ENCODE measurements at regions of chr15 and their contacts with region 1.

Region 1: DNA sequence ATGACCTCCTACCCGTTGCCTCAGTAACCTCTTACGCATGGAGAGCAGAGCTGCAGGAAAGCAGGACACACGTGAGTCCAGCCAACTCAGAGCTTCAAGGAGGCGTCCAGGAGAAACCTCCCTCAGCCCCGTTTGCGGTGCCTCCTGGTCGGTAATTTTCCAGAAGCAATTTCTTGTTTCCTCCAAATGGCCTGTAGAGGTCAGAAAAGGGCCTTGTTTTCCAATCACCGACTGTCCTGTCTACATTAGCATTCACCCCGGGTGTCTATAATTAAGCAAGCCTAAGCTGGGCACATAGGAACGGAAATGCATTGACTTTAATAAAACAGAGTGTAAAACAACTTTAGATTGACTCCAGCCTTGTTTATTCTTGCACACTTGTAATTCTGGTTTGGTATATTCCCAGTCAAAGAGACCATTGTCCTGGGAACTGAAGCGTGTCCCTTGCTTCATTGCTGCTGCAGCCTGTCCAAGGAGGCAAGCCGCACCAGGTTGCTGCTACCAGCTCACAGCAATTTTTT is 836.2 kb downstream of the AGBL1 start:
- DNase-seq: peak in 1 of 2 donors; percentile 27
- ATAC-seq: peak; percentile 81 to 88
- H3K4me3 ChIP-seq: no peak overlapping the region
- H3K27ac ChIP-seq: peak overlapping the region in 2 of 4 donors; percentile 32 to 54
- H3K4me1 ChIP-seq: peaks cover 8 to 26% of the 10 kb centered on the region in 2 donors
- H3K27me3 ChIP-seq: no peaks in the 10 kb centered on the region
- CTCF ChIP-seq: peak in 4 of 5 experiments; percentile 9 to 57 (median 44)
- POLR2A ChIP-seq: no peak

Region 2: GRCh38 chr15:86502301-86502700 is 413.6 kb before region 1 on chr15:
- in situ Hi-C with region 1: no loop called
- intact Hi-C with region 1: no loop called
- DNase-seq: no peak
- ATAC-seq: no peak
- H3K4me3 ChIP-seq: no peak overlapping the region
- H3K27ac ChIP-seq: no peak overlapping the region
- H3K4me1 ChIP-seq: no peaks in the 10 kb centered on the region
- H3K27me3 ChIP-seq: no peaks in the 10 kb centered on the region
- CTCF ChIP-seq: no peak
- POLR2A ChIP-seq: no peak

Region 3: DNA sequence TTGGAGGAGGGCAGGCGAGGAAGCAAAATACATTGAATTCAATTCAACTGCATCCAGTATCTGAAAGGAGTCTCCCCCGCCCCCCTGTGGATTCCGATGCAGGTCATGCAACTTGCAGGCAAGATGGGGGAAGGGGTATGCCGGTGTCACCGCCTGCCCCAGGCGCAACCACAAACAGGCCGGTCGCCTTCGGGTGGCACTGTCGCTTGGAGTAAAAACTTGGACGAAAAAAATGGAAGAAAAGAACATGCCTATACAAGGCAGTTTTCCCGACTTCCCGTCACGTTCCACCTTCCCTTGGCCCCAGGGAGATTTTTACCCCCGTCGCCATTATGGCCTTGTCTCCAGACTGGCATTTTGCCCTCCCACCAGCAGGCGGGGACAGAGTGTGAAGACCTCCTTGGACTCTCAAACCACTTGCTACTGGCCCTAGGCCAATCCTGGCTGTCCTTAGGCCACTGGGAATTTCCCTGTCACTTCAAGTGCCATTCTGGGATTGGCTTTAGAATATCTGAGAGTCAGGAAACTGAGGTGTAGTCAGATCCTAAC is 1342.3 kb after region 1 on chr15:
- in situ Hi-C with region 1: loop called in 2 of 4 experiments (anchors 10 to 25 kb)
- intact Hi-C with region 1: no loop called
- DNase-seq: no peak
- ATAC-seq: no peak
- H3K4me3 ChIP-seq: peak overlapping the region in 3 of 4 donors; percentile 44 to 58 (median 54)
- H3K27ac ChIP-seq: no peak overlapping the region
- H3K4me1 ChIP-seq: peaks cover 11 to 12% of the 10 kb centered on the region in 2 donors
- H3K27me3 ChIP-seq: peaks cover 38 to 47% (median 40%) of the 10 kb centered on the region in 3 donors
- CTCF ChIP-seq: no peak
- POLR2A ChIP-seq: no peak

Region 4: DNA sequence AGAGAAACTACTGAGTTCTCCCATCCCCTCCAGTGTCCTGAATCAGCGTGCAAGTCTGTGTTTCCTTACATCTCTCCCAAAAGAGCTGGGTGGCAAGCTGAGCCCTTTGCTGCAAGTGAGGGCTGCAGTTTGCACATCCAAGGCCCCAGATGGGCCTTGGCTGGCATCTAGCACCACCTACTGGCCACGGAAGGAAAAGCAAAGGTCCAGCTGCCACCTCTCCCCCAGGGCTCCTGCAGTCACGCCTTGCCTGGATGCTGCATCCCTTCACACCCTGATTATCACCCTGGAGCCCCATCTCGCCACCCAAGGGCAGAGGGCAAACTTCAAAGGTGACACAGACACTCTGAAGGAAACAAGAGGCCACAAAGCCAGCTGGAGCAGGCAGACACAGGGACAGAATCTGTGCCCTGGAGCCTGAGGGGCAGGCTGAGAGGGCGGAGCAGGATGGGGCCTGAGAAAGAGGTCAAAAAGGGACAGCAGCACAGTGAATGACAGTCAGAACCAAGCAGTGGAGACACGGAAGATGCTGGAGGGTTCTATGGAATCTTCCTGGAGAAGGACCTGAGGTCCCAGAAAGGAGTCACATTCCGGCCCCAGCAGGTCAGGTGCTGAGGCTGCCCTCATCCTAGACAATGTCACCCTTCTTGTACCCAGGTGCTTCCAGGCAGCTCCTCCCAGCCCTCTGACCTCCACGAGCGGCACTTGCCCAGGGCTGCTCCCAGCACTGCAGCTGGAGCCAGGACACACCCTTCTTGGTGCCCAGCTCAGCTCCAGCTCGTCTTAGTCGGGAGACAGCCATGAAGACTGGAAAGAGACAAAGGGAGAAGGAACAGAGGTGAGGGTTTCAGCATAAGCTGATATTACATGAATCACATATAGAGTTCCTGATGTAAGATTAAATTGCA is 1358.9 kb after region 1 on chr15:
- in situ Hi-C with region 1: loop called in 1 of 4 experiments (anchors 25 kb)
- intact Hi-C with region 1: no loop called
- DNase-seq: peak in 1 of 2 donors; percentile 23
- ATAC-seq: peak; percentile 72 to 80
- H3K4me3 ChIP-seq: no peak overlapping the region
- H3K27ac ChIP-seq: no peak overlapping the region
- H3K4me1 ChIP-seq: no peaks in the 10 kb centered on the region
- H3K27me3 ChIP-seq: no peaks in the 10 kb centered on the region
- CTCF ChIP-seq: peak; percentile 46 to 85 (median 72)
- POLR2A ChIP-seq: no peak